ENCODE measurements at regions of chr2 and their contacts with region 1.

Region 1: GRCh38 chr2:200650195-200650594 is 64.4 kb downstream of the AOX1 start:
- DNase-seq: no peak
- H3K4me3 Mint-ChIP-seq: no peak overlapping the region
- H3K27ac Mint-ChIP-seq: no peak overlapping the region
- H3K4me1 Mint-ChIP-seq: no peaks in the 10 kb centered on the region
- H3K27me3 Mint-ChIP-seq: no peaks in the 10 kb centered on the region

Region 2: DNA sequence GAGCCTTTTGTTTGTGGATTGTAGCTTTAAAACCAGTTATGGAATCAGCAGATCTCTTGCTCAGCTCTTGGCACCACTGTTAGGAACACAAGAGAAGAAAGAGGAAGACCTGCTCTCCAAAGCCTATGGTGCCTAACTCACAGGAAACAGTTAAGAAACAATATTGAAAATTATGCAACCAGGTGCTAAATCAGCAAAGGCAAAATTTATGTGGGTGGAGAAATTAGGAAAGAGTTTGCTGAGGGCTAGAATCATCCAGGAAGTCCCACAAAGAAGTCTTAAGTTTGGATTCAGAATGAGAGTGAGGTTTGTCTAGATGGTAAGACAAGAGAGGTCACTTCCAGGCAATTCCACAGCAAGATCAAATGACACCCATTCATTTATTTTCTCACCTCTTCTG is 14.9 kb before region 1 on chr2:
- CTCF ChIA-PET with region 1: no interaction called
- intact Hi-C with region 1: loop called (anchors 2 kb)
- DNase-seq: no peak
- H3K4me3 Mint-ChIP-seq: no peak overlapping the region
- H3K27ac Mint-ChIP-seq: no peak overlapping the region
- H3K4me1 Mint-ChIP-seq: no peaks in the 10 kb centered on the region
- H3K27me3 Mint-ChIP-seq: peaks cover 14% of the 10 kb centered on the region

Measured in activated naive CD4-positive, alpha-beta T cell treated with anti-CD3 and anti-CD28 coated beads for 36 hours (primary cell).